ENCODE measurements at regions of chr5 and their contacts with region 1.

Region 1: DNA sequence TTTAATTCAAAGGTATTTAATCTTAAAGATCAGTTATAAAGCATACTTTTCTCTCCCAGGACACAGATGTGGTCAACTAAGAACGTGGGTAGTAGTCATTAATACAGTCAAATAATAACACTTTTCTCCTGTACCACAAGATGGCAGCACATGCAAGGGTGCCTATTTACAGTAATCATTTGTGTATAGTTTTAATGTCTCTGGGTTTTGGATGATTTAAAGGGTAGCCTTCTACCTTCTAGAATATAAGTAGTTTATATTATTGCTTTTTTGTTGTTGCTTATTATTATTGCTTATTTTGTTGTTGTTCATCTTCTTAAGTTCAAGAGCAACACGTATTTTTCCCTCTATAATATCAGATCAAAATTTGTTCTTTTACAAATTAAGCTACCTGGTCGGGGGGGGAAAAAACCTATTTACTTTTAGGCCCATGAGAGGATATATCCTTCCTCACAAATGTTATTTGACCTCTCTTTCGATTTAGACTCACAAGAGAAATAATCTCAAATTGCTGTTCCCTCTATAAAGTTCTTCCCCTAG is 59.6 kb upstream of the SLC27A6 start:
- DNase-seq: no peak
- ATAC-seq: peak in 1 of 2 donors; percentile 75
- H3K4me3 ChIP-seq: no peak overlapping the region
- H3K27ac ChIP-seq: no peak overlapping the region
- H3K4me1 ChIP-seq: no peaks in the 10 kb centered on the region
- H3K27me3 ChIP-seq: no peaks in the 10 kb centered on the region
- CTCF ChIP-seq: peak; percentile 48 to 77 (median 55)
- POLR2A ChIP-seq: no peak

Region 2: GRCh38 chr5:129094087-129094923 is 188.7 kb after region 1 on chr5 and contains the start of gene ISOC1:
- in situ Hi-C with region 1: no loop called
- intact Hi-C with region 1: loop called (anchors 10 kb)
- DNase-seq: peak; percentile 68 to 79
- ATAC-seq: peak; percentile 83 to 85
- H3K4me3 ChIP-seq: peak within 1 kb of the TSS; percentile 77 to 95 (median 88)
- H3K27ac ChIP-seq: peak within 1 kb of the TSS; percentile 84 to 89 (median 85)
- H3K4me1 ChIP-seq: peaks cover 31 to 37% of the 10 kb centered on the region in 2 donors
- H3K27me3 ChIP-seq: no peaks in the 10 kb centered on the region
- CTCF ChIP-seq: no peak
- POLR2A ChIP-seq: peak; percentile 80 to 90
- total RNA-seq, gene ISOC1: 11.0 to 14.0 (median 12.9) TPM

Region 3: GRCh38 chr5:129125810-129126209 is 220.2 kb after region 1 on chr5:
- in situ Hi-C with region 1: no loop called
- intact Hi-C with region 1: loop called (anchors 5 kb)
- DNase-seq: no peak
- ATAC-seq: no peak
- H3K4me3 ChIP-seq: no peak overlapping the region
- H3K27ac ChIP-seq: peak overlapping the region in 2 of 4 donors; percentile 10 to 34
- H3K4me1 ChIP-seq: no peaks in the 10 kb centered on the region
- H3K27me3 ChIP-seq: no peaks in the 10 kb centered on the region
- CTCF ChIP-seq: no peak
- POLR2A ChIP-seq: no peak

Region 4: DNA sequence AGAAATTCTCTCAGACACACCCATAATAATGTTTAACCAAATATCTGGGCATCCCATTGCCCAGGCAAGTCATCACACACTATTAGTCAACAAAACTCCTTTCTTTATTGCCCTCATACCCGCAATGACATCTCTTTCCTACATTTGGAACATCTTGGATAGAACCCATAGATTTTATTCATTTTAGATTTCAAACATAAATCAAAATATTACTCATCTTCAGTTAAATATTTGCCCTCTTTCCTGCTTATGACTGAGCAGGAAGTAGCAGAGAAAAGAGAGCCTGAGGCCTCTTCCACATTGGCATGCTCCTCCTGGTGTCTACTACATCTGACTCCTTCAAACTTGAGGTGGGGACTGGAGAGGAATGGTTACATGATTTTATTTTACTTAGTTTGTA is 1590.6 kb after region 1 on chr5:
- in situ Hi-C with region 1: no loop called
- intact Hi-C with region 1: no loop called
- DNase-seq: no peak
- ATAC-seq: no peak
- H3K4me3 ChIP-seq: no peak overlapping the region
- H3K27ac ChIP-seq: no peak overlapping the region
- H3K4me1 ChIP-seq: no peaks in the 10 kb centered on the region
- H3K27me3 ChIP-seq: no peaks in the 10 kb centered on the region
- CTCF ChIP-seq: no peak
- POLR2A ChIP-seq: no peak